Common myeloid progenitor, CD34-positive (primary cell): ENCODE measurements at regions of chr14 and their contacts with region 1.

Region 1: DNA sequence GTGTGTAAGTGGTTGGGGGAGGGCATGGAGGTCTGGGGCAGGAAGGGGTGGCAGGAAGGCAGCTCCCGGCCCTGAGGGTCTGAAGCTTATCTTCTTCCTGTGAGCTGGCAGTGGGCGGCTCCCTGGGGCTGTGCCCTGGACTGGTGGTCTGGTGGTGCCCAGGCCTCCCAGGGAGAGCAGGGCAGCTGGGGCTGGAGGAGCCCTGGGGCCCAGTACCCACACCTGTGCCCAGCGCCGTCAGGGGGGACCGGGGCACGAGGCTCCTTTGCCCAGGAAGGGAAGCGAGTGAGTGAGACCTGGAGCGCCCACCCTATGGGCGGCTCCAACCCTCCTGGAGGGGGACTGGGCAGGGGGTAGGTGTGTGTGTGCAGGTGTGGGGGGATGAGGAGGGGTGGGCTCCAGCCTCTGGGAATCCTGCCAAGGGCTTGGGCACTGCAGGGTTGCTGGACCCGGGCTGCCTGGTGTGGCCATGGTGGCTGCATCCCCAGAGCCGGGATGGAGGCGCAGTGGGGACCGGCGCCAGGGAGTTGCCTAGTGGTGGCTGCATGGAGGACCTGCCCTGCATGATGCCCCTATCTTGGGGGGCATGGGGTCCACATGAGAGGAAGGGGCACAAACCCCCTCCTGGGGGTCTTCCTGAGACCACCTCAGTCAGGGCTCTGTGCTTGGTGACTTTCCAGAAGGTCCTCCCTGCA is 353.6 kb downstream of the TMEM121 start:
- DNase-seq: peak; percentile 83 to 93 (median 91)
- H3K4me3 ChIP-seq: peak overlapping the region; percentile 73 to 93 (median 86)
- H3K27ac ChIP-seq: peak overlapping the region; percentile 72 to 85
- H3K4me1 ChIP-seq: peaks cover 0 to 89% (median 73%) of the 10 kb centered on the region in 4 experiments
- H3K27me3 ChIP-seq: no peaks in the 10 kb centered on the region

Region 2: DNA sequence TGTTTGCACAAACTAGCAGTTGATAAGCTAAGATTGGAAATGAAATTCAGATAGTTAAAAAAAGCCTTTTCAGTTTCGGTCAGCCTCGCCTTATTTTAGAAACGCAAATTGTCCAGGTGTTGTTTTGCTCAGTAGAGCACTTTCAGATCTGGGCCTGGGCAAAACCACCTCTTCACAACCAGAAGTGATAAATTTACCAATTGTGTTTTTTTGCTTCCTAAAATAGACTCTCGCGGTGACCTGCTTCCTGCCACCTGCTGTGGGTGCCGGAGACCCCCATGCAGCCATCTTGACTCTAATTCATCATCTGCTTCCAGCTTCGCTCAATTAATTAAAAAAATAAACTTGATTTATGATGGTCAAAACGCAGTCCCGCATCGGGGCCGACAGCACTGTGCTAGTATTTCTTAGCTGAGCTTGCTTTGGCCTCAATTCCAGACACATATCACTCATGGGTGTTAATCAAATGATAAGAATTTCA is 18.0 kb before region 1 on chr14:
- CTCF ChIA-PET with region 1: interaction called, 15 read pairs
- POLR2A ChIA-PET with region 1: interaction called, 47 read pairs
- DNase-seq: peak; percentile 90 to 98 (median 98)
- H3K4me3 ChIP-seq: peak overlapping the region in 6 of 7 experiments; percentile 74 to 90 (median 82)
- H3K27ac ChIP-seq: peak overlapping the region; percentile 68 to 75
- H3K4me1 ChIP-seq: peaks cover 0 to 97% (median 75%) of the 10 kb centered on the region in 4 experiments
- H3K27me3 ChIP-seq: no peaks in the 10 kb centered on the region

Region 3: DNA sequence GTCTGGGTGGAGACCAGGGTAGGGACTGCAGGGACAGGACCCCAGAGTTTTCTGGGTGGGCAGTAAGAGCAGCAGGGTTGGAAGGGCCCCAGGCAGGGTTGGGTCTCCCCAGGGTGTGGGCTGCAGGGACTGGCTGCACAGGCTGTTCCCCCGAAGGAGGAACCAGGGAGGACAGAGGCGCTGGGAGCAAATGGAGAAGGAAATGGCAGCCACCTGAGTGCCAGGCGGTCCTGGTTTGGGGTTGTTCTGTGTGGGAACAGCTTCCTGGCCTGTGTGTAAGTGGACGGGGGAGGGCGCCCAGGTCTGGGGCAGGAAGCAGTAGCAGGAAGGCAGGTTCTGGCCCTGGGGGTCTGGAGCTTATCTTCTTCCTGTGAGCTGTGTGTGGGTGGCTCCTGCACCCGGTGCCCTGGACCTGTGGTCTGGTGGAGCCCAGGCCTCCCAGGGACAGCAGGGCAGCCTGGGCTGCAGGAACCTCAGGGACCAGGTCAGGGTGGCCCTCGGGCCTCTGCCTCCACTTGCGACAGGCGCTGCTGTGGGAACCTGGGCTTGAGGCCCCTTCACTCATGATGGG is 19.1 kb after region 1 on chr14:
- CTCF ChIA-PET with region 1: interaction called, 14 read pairs
- POLR2A ChIA-PET with region 1: interaction called, 12 read pairs
- DNase-seq: peak; percentile 83 to 91 (median 85)
- H3K4me3 ChIP-seq: peak overlapping the region; percentile 5 to 96 (median 67)
- H3K27ac ChIP-seq: peak overlapping the region in 1 of 2 experiments; percentile 14
- H3K4me1 ChIP-seq: peaks cover 0 to 98% (median 87%) of the 10 kb centered on the region in 4 experiments
- H3K27me3 ChIP-seq: no peaks in the 10 kb centered on the region